ENCODE measurements at regions of chrX and their contacts with region 1.

Region 1: DNA sequence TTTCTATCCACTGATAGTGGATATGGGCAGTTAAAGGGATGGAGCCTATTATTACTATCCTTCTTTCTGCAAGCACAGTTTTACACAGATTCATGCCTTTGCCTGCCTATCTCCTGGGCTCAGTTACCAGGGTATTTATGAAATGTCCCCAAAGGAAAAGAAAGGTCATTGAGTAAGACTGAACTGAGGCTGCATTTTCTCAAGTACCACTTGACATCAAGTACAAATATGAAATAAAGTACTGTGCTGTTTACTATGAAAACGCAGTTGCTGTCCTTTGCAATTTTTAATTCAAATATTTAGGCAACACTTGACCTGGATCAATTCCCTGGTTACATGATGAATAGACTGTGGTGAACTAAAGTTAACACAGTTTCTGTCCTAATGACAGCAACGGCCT is 23.5 kb upstream of the SPANXN4 start:
- DNase-seq: no peak
- ATAC-seq: no peak
- H3K4me3 ChIP-seq: no peak overlapping the region
- H3K27ac ChIP-seq: no peak overlapping the region
- H3K4me1 ChIP-seq: no peaks in the 10 kb centered on the region
- H3K27me3 ChIP-seq: no peaks in the 10 kb centered on the region
- CTCF ChIP-seq: no peak

Region 2: DNA sequence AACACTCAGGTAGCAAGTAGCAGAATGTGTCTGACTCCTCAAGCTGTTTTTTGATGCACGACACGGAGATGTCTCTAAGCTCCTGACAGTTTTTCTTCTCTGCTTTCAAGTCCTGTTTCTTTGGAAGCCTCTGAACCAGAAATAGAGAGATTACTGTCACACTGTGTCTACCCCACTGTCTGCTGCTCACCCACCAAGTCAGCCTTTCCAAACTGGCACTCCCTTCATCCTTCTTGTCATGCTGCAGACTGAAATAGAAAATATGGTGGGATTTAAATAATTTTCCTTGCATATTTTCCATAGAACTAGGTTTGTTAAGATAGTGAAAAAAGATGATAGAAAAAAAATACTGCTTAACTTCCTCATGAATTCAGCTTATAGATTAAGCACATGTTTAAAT is 79.0 kb before region 1 on chrX:
- CTCF ChIA-PET with region 1: no interaction called
- POLR2A ChIA-PET with region 1: no interaction called
- in situ Hi-C with region 1: no loop called
- intact Hi-C with region 1: no loop called
- DNase-seq: no peak
- ATAC-seq: no peak
- H3K4me3 ChIP-seq: no peak overlapping the region
- H3K27ac ChIP-seq: no peak overlapping the region
- H3K4me1 ChIP-seq: no peaks in the 10 kb centered on the region
- H3K27me3 ChIP-seq: no peaks in the 10 kb centered on the region
- CTCF ChIP-seq: no peak

Region 3: DNA sequence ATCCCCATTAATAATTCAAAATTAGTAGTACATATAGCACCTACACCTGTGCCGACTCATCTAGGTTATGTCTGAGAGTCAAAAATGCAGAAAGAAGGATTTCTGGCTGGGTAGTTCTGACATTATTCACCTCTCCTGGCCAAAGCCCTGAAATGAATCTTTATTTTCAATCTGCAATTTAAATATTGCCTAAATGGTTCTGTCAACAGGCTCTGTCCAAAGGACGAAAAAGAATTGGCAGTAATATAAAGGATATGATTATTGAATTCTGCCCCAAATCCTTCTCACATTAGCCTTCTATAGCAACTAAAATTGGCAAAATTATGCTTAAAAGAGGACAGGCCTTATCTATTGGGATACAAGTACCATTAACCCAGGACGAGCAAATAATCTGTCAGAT is 63.4 kb before region 1 on chrX:
- CTCF ChIA-PET with region 1: no interaction called
- POLR2A ChIA-PET with region 1: no interaction called
- in situ Hi-C with region 1: no loop called
- intact Hi-C with region 1: loop called (anchors 10 kb)
- DNase-seq: no peak
- ATAC-seq: no peak
- H3K4me3 ChIP-seq: no peak overlapping the region
- H3K27ac ChIP-seq: no peak overlapping the region
- H3K4me1 ChIP-seq: no peaks in the 10 kb centered on the region
- H3K27me3 ChIP-seq: no peaks in the 10 kb centered on the region
- CTCF ChIP-seq: no peak

Region 4: GRCh38 chrX:143058120-143058519 is 55.9 kb after region 1 on chrX:
- CTCF ChIA-PET with region 1: no interaction called
- POLR2A ChIA-PET with region 1: no interaction called
- in situ Hi-C with region 1: no loop called
- intact Hi-C with region 1: no loop called
- DNase-seq: no peak
- ATAC-seq: no peak
- H3K4me3 ChIP-seq: no peak overlapping the region
- H3K27ac ChIP-seq: no peak overlapping the region
- H3K4me1 ChIP-seq: no peaks in the 10 kb centered on the region
- H3K27me3 ChIP-seq: no peaks in the 10 kb centered on the region
- CTCF ChIP-seq: no peak